ENCODE measurements at regions of chr1 and their contacts with region 1.

Region 1: DNA sequence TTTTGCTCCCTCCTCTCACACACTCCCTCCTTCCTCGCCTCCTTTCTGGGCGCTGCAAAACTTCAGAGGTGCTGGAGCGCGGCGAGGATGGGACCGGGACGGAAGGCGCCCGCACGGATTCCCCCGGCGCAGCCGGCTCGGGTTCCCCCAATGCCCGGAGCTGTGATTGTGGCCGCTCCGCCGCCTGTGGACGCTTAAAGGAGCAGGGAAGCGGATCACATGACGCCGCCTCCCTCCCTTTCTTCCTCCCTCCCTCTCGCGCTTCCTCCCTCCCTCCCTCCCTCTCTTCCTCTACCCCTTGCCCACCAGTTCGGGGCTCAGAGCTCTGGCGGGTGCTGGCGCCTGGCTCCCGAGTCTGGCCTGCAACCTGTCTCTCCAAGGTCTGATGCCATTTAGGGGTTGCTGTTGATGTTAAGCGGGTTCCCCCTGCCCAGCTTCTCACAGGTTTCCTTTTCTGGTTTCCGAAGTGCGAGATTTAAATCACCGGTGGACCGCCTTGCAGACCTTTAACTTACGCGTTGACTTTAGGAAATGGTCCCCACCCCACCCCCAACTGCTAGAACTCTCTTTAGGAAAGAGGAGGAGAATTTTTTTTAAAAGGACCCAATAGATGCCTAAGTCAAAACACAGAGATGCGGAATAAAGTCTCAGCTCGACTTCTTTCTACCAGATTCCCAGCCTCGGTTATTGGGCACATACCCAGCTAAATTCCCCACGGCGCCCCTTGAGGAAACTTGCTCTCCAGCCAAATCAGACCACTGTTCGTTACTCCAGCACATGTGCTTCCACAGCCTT is at the start of gene WLS:
- DNase-seq: peak; percentile 87
- H3K4me3 ChIP-seq: peak within 1 kb of the TSS; percentile 59
- H3K27ac ChIP-seq: peak within 1 kb of the TSS; percentile 62
- H3K4me1 ChIP-seq: no peaks in the 10 kb centered on the region
- H3K27me3 ChIP-seq: no peaks in the 10 kb centered on the region
- CTCF ChIP-seq: no peak
- total RNA-seq, gene WLS: 88.3 to 116 TPM

Region 2: DNA sequence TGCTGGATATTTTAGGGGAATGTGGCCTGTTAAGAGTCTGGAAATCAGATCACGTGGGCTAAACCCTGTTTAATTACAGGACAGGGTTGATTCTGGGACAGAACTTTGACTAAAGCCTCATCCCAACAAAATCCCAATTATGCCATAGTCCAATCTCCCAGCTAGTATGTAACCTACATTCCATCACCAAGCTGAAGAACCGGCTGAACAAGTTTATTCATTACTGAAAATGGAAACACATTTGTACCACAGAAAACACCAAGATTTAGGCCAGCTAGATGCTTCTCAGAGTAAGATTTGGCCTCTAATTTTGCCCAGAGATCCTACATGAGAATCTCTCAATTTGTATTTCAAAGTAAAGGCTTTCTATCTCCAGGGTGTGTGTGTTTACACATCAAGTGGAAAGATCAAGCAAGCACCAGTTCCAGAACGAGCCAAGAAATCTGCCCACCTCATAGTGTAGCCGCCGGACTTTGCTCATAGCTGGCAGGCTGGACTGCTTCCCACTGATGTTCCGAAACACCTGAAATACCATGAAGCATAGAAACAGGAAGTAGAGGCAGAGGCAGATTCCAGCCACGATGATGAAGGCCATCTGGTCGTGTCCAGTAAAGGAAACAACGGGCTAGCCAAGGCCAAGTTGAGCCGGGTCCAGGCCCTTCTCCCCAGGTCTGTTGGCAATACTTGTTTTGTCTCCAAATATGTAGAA is 87.0 kb before region 1 on chr1:
- intact Hi-C with region 1: loop called (anchors 5 kb)
- DNase-seq: peak; percentile 72
- H3K4me3 ChIP-seq: no peak overlapping the region
- H3K27ac ChIP-seq: peak overlapping the region; percentile 51
- H3K4me1 ChIP-seq: no peaks in the 10 kb centered on the region
- H3K27me3 ChIP-seq: no peaks in the 10 kb centered on the region
- CTCF ChIP-seq: no peak

Region 3: DNA sequence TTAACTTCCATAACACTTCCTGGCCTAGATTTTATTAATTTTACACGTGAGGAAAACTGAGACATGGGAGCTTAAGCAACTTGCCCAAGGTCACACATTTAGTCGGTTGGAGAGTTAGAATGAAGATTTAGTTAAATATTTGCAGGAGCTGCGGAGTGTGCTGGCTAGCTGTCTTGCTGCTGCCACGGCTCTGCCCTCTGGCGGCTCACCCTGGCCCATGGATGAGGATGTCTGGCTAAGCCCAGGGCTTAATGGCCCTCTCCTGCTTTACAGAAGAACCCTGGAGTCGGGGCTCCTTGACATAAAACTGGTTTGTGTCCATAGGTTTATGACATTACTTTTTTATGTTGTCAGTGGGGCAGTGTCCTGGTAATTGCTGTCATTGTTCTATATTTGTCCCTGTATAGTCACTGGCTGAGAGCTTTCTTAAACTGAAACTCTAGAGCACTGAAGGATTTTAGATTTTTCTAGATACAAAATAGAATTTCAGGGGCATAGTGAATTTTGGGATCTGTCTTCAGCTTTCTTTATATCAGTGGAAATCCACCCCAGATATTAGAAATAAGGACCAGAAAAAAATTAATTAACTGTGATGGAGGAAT is 88.6 kb after region 1 on chr1:
- intact Hi-C with region 1: loop called (anchors 10 kb)
- DNase-seq: peak; percentile 71
- H3K4me3 ChIP-seq: no peak overlapping the region
- H3K27ac ChIP-seq: no peak overlapping the region
- H3K4me1 ChIP-seq: no peaks in the 10 kb centered on the region
- H3K27me3 ChIP-seq: no peaks in the 10 kb centered on the region
- CTCF ChIP-seq: peak; percentile 73

Region 4: GRCh38 chr1:68384321-68384813 is 151.8 kb after region 1 on chr1:
- intact Hi-C with region 1: no loop called
- DNase-seq: no peak
- H3K4me3 ChIP-seq: no peak overlapping the region
- H3K27ac ChIP-seq: peak overlapping the region; percentile 18
- H3K4me1 ChIP-seq: no peaks in the 10 kb centered on the region
- H3K27me3 ChIP-seq: no peaks in the 10 kb centered on the region
- CTCF ChIP-seq: no peak

Region 5: DNA sequence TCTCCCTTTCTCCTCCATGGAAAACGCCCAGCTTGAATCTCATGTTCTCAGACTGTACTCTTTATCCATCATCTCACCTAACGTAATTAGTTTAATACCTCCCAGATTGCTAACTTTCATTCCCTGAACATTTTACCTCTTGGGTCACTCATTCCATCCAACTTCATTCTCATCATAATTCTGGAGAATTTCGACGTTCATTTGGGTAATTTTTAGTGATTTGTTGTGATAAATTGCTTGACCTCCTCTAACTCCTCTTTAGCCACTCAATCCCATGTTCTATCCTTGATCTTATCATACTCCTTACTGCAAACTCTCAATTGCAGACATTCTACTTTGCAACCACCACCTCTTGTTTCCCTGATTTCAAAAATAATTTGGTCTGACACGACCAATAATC is 188.8 kb after region 1 on chr1:
- intact Hi-C with region 1: no loop called
- DNase-seq: no peak
- H3K4me3 ChIP-seq: no peak overlapping the region
- H3K27ac ChIP-seq: no peak overlapping the region
- H3K4me1 ChIP-seq: no peaks in the 10 kb centered on the region
- H3K27me3 ChIP-seq: no peaks in the 10 kb centered on the region
- CTCF ChIP-seq: no peak